ENCODE measurements at regions of chr4 and their contacts with region 1.

Region 1: GRCh38 chr4:16136827-16137226 is 53.0 kb upstream of the PROM1 start:
- DNase-seq: no peak

Region 2: DNA sequence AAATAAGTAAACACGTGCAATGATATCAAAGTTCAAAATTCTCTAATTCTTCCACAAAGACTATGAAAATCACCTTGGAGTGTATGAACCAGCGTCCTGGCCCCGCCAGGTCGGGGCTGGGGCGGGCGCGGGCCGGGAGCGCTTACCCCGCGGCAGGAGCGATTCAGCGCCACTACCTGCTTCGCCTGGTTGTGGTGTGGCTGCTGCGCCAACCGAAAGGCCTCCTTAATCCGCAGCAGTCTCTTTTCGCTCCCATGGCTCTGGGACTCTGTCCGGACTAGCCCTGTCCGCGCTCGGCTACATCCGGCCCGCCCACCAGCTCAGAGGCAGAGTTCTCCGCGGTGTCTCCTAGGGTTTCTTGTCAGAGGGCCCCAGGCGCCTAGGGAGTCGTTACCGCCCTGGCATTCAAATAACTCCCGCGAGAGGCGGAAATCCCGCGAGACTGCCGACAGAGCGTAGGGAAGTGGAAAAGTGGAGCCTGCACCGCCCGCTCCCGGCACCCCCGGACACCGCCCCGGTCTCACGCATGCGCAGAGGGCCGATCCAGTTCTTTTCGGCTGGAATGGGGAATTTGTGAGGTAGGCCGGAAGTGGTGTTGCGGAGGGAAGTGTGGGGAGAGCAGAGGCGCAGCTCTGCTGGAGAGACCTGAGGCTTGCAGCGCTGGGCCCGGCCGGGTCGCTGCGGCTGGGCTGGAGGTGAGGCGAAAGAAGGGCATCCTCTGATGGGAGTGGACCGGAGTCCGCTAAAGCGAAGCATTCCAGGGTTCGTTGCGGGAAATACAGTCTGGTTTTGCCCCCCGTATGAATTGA is 455.4 kb before region 1 on chr4 and contains the start of gene FAM200B:
- intact Hi-C with region 1: no loop called
- DNase-seq: peak; percentile 100
- total RNA-seq, gene FAM200B: 21.6 TPM

Region 3: DNA sequence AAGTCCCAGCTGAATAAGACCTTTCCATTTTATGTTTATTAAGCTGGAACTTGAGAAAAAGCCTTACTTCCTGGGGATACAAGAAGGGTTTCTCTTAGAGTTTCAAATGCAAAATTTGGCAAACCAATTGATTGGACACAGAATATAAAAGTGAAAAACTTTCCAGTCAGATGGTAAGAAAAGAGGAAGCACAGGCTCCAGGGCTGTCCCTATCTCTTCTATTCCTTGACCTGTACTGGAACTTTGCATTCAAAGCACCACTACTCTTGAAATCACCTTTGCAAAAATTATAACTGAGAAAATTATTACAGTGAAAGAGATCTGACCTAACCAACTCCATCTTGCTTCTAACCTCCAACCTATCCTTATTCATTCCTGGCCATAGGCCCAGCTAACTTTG is 64.7 kb before region 1 on chr4:
- intact Hi-C with region 1: loop called (anchors 5 kb)
- DNase-seq: no peak

Region 4: DNA sequence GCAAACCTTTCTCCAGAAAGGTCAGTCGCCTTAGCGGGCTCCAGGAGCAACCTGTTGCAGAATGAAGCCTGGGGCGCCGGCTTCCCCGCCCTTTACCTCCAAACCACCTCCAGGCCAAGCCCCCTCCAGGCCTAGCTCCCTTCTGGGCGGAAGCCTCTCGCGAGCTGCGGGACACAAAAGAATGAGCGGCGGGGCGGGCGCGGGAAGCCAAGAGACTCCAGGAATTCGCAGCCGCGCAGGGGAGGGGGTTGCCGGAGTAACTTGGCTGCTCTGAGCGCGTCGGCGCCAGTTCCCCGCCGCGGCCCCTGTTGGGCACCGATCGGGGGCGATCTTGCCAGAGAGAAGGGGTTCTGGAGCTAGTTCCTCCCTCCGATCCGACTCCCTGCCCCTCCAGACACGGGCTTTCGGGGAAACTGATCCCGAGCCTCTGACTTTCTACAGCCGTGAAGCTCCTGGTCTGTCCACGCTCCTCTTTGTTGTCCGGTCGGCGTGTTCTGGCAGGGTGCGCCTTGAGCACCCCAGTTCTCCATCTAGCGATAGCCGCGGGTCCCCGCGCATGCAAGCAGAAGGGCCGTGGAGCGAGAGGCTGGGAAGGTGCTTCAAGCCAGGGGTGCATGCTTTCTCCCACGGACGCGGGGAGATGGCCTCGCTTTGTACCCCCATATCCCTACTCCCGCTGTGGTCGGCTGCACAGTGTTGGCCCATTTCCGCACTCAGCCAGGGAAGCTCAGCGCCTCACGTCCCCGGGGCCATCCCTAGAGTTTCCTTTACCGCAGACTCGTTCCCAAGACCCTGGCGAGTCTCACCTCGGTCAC is 54.2 kb before region 1 on chr4:
- intact Hi-C with region 1: no loop called
- DNase-seq: peak; percentile 78

Region 5: GRCh38 chr4:16461362-16461761 is 324.5 kb after region 1 on chr4:
- intact Hi-C with region 1: no loop called
- DNase-seq: no peak

Measured in cardiac septum (tissue), 1 donor.